H1 (cell line): ENCODE measurements at regions of chr1 and their contacts with region 1.

Region 1: GRCh38 chr1:178037503-178038253 is 56.2 kb upstream of the RASAL2 start:
- DNase-seq: peak; percentile 54 to 86
- H3K4me3 ChIP-seq: peak overlapping the region; percentile 42 to 66 (median 58)
- H3K27ac ChIP-seq: no peak overlapping the region
- H3K4me1 ChIP-seq: no peaks in the 10 kb centered on the region; a peak in 1 of 7 replicates
- H3K27me3 ChIP-seq: no peaks in the 10 kb centered on the region; a peak in 1 of 7 replicates
- CTCF ChIP-seq: peak; percentile 57 to 84 (median 59)
- EP300 ChIP-seq: no peak
- POLR2A ChIP-seq: peak in 1 of 2 experiments; percentile 50; a peak in 1 of 3 replicates
- RAD21 ChIP-seq: peak; percentile 22 to 42; a peak in 3 of 4 replicates

Region 2: GRCh38 chr1:177471244-177471643 is 566.4 kb before region 1 on chr1:
- CTCF ChIA-PET with region 1: no interaction called
- POLR2A ChIA-PET with region 1: no interaction called
- DNase-seq: no peak
- H3K4me3 ChIP-seq: no peak overlapping the region
- H3K27ac ChIP-seq: no peak overlapping the region
- H3K4me1 ChIP-seq: no peaks in the 10 kb centered on the region
- H3K27me3 ChIP-seq: no peaks in the 10 kb centered on the region
- CTCF ChIP-seq: no peak
- EP300 ChIP-seq: no peak
- POLR2A ChIP-seq: no peak
- RAD21 ChIP-seq: no peak

Region 3: DNA sequence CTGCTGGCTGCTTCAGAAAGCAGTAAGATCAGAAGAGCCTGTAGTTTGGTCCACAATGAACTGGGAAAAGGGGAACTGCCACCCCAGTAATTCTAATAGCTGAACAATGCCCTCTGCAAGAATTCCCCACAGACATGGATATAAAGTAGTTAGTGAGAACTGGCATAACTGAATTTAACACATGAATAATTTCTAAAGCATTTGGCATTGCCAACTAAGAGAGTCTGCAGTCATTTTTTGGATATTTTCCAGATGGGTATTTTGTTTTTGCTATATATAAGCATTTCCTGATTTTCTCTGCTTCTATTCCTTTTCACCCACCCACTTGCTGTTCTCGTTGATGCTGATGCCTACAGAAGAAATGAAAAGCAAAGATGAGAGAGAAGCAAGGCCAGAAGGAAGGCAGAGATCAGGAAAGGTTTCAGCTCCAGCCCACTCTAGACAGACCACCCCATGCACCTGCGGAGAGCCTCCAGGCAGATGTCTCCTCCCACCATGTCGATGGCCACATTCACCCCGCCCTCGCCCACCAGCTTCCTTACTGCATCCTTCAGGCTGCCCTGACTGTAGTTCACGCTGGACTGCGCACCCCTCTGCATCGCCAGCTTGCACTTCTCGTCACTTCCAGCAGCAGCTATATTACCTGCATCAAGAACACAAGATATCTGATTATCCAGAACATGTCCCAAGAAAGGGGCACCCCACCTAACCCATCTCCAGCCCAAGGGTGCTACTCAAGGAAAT is 11.9 kb before region 1 on chr1:
- CTCF ChIA-PET with region 1: interaction called, 21 read pairs
- POLR2A ChIA-PET with region 1: interaction called, 3 read pairs
- DNase-seq: no peak
- H3K4me3 ChIP-seq: no peak overlapping the region
- H3K27ac ChIP-seq: no peak overlapping the region
- H3K4me1 ChIP-seq: no peaks in the 10 kb centered on the region
- H3K27me3 ChIP-seq: no peaks in the 10 kb centered on the region
- CTCF ChIP-seq: no peak
- EP300 ChIP-seq: no peak
- POLR2A ChIP-seq: no peak
- RAD21 ChIP-seq: no peak

Region 4: GRCh38 chr1:178055779-178056471 is 18.2 kb after region 1 on chr1:
- CTCF ChIA-PET with region 1: interaction called, 39 read pairs
- POLR2A ChIA-PET with region 1: interaction called, 6 read pairs
- DNase-seq: no peak
- H3K4me3 ChIP-seq: no peak overlapping the region
- H3K27ac ChIP-seq: no peak overlapping the region
- H3K4me1 ChIP-seq: peaks cover 4 to 28% (median 10%) of the 10 kb centered on the region in 4 experiments; a peak in 6 of 7 replicates
- H3K27me3 ChIP-seq: no peaks in the 10 kb centered on the region
- CTCF ChIP-seq: peak in 2 of 3 experiments; percentile 16 to 23; a peak in 2 of 4 replicates
- EP300 ChIP-seq: no peak
- POLR2A ChIP-seq: no peak
- RAD21 ChIP-seq: peak in 1 of 2 experiments; percentile 10; a peak in 1 of 4 replicates

Region 5: DNA sequence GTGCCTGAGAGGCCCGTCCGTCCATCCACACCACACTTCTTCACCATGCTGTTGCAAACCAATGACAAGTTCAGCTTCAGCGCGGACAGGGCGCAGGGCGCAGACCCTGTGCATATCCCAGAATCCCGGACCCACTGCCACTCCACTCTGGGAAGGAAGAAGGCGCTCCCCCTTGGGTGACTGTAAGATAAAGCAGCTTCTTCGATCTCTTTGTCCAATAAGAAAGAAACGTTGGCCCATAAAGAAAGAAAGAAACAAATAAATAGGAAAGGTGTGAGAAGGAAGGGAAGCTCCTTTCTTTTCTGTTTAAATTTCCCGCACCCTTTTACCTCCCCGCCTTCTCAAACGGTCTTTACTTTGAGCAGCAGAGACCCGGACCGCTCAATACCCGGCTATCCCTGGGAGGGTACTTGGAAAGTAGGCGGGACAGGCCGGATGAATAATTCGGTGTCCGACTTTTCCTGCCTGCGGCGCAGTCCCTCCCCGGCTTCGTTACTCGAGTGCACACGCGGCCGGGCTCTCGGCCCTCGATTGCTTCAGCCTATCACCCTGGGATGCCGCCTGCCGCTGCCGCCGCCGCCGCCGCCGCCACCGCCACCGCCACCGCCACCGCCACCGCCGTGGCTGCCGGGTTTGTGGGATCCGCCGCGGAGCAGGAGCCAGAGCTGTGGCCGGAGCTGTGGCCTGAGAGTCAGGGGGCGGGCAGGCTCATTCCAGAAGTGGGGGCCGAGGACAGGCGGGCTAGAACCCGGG is 55.7 kb after region 1 on chr1:
- CTCF ChIA-PET with region 1: interaction called, 20 read pairs
- POLR2A ChIA-PET with region 1: interaction called, 14 read pairs
- DNase-seq: peak; percentile 86 to 87
- H3K4me3 ChIP-seq: peak overlapping the region; percentile 82 to 100 (median 92)
- H3K27ac ChIP-seq: peak overlapping the region; percentile 54; the same call in 1 of the 2 replicates
- H3K4me1 ChIP-seq: peaks cover 0 to 9% (median 8%) of the 10 kb centered on the region in 4 experiments; a peak in 5 of 7 replicates
- H3K27me3 ChIP-seq: no peaks in the 10 kb centered on the region
- CTCF ChIP-seq: peak in 1 of 3 experiments; percentile 4; a peak in 1 of 4 replicates
- EP300 ChIP-seq: peak in 1 of 2 experiments; percentile 60; a peak in 1 of 3 replicates
- POLR2A ChIP-seq: peak in 1 of 2 experiments; percentile 69; a peak in 1 of 3 replicates
- RAD21 ChIP-seq: no peak; a peak in 1 of 4 replicates